ENCODE measurements at regions of chr11 and their contacts with region 1.

Region 1: GRCh38 chr11:32176223-32176934 is 85.5 kb downstream of the RCN1 start:
- DNase-seq: peak; percentile 90
- ATAC-seq: peak; percentile 83
- H3K4me3 ChIP-seq: no peak overlapping the region
- H3K27ac ChIP-seq: no peak overlapping the region
- H3K4me1 ChIP-seq: no peaks in the 10 kb centered on the region
- H3K27me3 ChIP-seq: no peaks in the 10 kb centered on the region
- CTCF ChIP-seq: peak; percentile 77 to 85 (median 81)
- POLR2A ChIP-seq: no peak
- RAD21 ChIP-seq: peak; percentile 93

Region 2: DNA sequence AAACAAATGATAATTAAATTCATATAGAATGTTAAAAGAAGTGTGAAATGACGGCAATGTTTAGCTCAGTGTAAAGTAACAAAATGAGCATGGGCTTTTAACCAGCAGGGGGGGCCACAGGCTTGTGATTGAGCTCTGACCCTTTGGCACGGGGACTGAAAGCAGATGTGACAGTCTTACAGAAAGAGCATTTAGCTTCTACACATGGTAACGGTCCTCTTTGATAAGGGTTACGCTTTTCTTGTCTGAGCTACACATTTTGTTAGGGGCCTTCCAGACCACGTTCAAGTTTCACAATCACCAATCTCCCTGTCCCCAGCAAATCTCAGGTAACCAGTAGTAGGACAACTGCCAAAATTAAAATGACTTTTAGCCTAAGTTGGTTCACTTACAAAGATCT is 1069.3 kb before region 1 on chr11:
- CTCF ChIA-PET with region 1: interaction called, 21 read pairs
- POLR2A ChIA-PET with region 1: no interaction called
- RAD21 ChIA-PET with region 1: no interaction called
- intact Hi-C with region 1: loop called (anchors 2 kb)
- DNase-seq: peak; percentile 51
- ATAC-seq: peak; percentile 89
- H3K4me3 ChIP-seq: no peak overlapping the region
- H3K27ac ChIP-seq: no peak overlapping the region
- H3K4me1 ChIP-seq: no peaks in the 10 kb centered on the region
- H3K27me3 ChIP-seq: no peaks in the 10 kb centered on the region
- CTCF ChIP-seq: peak; percentile 67 to 86 (median 72)
- POLR2A ChIP-seq: no peak
- RAD21 ChIP-seq: peak; percentile 83

Region 3: GRCh38 chr11:31340903-31341572 is 835.3 kb before region 1 on chr11:
- CTCF ChIA-PET with region 1: interaction called, 3 read pairs
- POLR2A ChIA-PET with region 1: no interaction called
- RAD21 ChIA-PET with region 1: no interaction called
- intact Hi-C with region 1: loop called (anchors 10 kb)
- DNase-seq: peak; percentile 26
- ATAC-seq: peak; percentile 75
- H3K4me3 ChIP-seq: no peak overlapping the region
- H3K27ac ChIP-seq: no peak overlapping the region
- H3K4me1 ChIP-seq: no peaks in the 10 kb centered on the region
- H3K27me3 ChIP-seq: no peaks in the 10 kb centered on the region
- CTCF ChIP-seq: peak; percentile 41 to 78 (median 75); a peak in 5 of 6 replicates
- POLR2A ChIP-seq: no peak
- RAD21 ChIP-seq: peak; percentile 30; the same call in 1 of the 2 replicates

Region 4: DNA sequence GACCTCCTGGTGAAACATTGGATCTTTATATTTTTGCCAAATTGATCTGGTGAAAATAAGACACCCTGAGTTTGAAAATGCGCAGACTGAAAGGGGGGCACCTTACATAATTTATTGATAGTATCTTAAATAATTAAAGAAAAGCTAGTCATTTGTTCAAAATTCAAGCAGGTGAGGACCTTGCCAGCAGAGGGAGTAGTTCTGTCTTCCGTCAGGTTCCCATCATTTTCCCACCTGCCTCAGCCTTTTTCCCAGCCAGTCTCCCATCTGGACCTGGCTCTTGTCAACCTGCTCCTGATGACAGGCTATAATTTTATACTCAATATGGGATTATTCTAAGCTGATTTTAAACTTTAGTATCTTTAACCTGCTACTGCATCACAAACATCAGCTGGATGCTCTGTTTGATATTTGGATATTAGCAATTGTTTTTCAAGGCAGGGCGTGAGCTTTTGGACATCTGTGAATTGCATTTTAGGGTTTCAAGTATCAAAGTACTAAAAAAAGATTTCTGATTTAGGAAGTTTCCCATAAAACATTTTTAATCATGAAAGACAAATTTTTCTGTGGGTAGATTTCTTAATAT is 534.8 kb before region 1 on chr11:
- CTCF ChIA-PET with region 1: interaction called, 11 read pairs
- POLR2A ChIA-PET with region 1: no interaction called
- RAD21 ChIA-PET with region 1: no interaction called
- intact Hi-C with region 1: loop called (anchors 5 kb)
- DNase-seq: peak; percentile 39
- ATAC-seq: peak; percentile 69; the same call in 1 of the 2 replicates
- H3K4me3 ChIP-seq: no peak overlapping the region
- H3K27ac ChIP-seq: no peak overlapping the region
- H3K4me1 ChIP-seq: peaks cover 8 to 13% of the 10 kb centered on the region in 2 experiments
- H3K27me3 ChIP-seq: no peaks in the 10 kb centered on the region
- CTCF ChIP-seq: peak; percentile 43 to 72 (median 69); a peak in 5 of 6 replicates
- POLR2A ChIP-seq: no peak
- RAD21 ChIP-seq: peak; percentile 60

Region 5: DNA sequence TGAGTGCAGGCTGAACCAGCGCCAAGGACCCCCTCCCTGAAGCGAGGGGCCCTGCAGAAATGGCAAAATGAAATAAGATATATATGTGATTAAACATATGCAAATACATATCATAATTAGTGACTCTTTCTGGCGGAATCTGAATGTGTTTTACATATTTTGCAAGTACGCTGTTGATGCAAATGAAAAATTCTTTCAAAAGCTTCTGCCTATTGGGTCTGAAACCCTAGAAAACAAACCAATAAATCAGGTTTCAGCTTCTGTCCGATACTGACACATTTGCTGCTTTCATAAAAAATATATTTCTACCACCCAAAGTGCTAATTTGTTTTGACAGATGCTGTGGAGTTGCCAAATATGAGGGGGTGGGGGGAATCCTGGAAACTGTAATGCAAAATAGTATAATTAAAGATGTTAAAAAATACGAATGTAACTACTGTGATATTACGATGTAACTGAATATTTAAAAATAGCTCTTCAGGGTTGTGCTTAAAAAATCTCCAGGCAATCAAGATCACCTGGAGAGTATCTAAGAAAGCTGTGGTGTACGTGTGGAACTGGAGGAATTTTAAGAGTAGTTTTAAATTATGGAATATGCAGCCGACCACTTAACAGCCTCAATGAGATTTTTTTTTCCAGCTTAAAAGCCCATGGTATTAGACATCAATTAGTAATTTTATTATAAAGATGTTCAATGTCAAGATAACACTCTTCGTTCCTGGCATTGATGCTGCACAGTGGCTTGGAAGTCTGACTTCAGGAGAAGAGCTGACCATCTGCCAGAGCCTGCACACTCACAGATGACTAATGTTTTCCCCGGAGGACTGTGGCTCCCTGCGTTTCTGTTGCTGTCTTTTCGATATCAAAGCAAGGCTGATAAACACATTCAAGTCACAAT is 207.7 kb before region 1 on chr11:
- CTCF ChIA-PET with region 1: interaction called, 3 read pairs
- POLR2A ChIA-PET with region 1: no interaction called
- RAD21 ChIA-PET with region 1: no interaction called
- intact Hi-C with region 1: loop called (anchors 10 kb)
- DNase-seq: no peak
- ATAC-seq: no peak
- H3K4me3 ChIP-seq: no peak overlapping the region
- H3K27ac ChIP-seq: no peak overlapping the region
- H3K4me1 ChIP-seq: no peaks in the 10 kb centered on the region
- H3K27me3 ChIP-seq: no peaks in the 10 kb centered on the region
- CTCF ChIP-seq: no peak
- POLR2A ChIP-seq: no peak
- RAD21 ChIP-seq: no peak

Region 6: DNA sequence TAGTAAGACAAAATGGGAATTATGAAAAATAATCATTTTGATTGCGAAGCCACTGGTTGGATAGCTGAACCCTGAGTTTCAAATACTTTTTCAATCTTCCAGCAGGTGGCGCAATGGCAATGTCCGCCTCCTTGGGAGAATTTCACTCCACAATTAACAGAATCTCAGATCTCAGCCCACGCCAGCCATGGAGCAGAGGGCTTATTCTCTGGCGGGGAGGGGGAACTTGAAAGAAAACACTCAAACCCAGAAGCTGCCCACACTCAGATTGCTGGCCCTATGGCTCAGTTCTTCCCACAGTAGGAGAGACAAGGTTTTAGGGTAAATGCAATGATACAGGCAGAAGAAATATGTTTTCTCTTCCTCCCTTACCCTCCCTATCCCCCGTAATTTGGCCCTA is 124.2 kb before region 1 on chr11:
- CTCF ChIA-PET with region 1: interaction called, 22 read pairs
- POLR2A ChIA-PET with region 1: no interaction called
- RAD21 ChIA-PET with region 1: interaction called in 1 of 2 experiments, 4 read pairs
- intact Hi-C with region 1: loop called (anchors 1 kb)
- DNase-seq: peak; percentile 49
- ATAC-seq: peak; percentile 90
- H3K4me3 ChIP-seq: no peak overlapping the region
- H3K27ac ChIP-seq: no peak overlapping the region
- H3K4me1 ChIP-seq: peaks cover 0 to 5% of the 10 kb centered on the region in 2 experiments; a peak in 1 of 4 replicates
- H3K27me3 ChIP-seq: no peaks in the 10 kb centered on the region; the same call in 1 of the 2 replicates
- CTCF ChIP-seq: peak; percentile 60 to 94 (median 79)
- POLR2A ChIP-seq: no peak
- RAD21 ChIP-seq: peak; percentile 86

Measured in HCT116 (cell line).